ENCODE measurements at regions of chr1 and their contacts with region 1.

Region 1: GRCh38 chr1:95233737-95234500 is at the start of gene RWDD3:
- DNase-seq: peak; percentile 70 to 96
- H3K4me3 ChIP-seq: peak within 1 kb of the TSS; percentile 68 to 85
- H3K27ac ChIP-seq: peak within 1 kb of the TSS; percentile 86 to 93
- H3K4me1 ChIP-seq: peaks cover 0 to 8% of the 10 kb centered on the region in 2 donors
- H3K27me3 ChIP-seq: no peaks in the 10 kb centered on the region
- CTCF ChIP-seq: peak; percentile 52 to 90 (median 79)
- total RNA-seq, gene RWDD3: not detected

Region 2: GRCh38 chr1:94541175-94542087 is 692.5 kb before region 1 on chr1 and contains the start of gene F3:
- intact Hi-C with region 1: loop called (anchors 10 kb)
- DNase-seq: peak; percentile 68 to 95
- H3K4me3 ChIP-seq: peak within 1 kb of the TSS; percentile 73 to 100
- H3K27ac ChIP-seq: peak within 1 kb of the TSS; percentile 88 to 97
- H3K4me1 ChIP-seq: peaks cover 8 to 21% of the 10 kb centered on the region in 2 donors
- H3K27me3 ChIP-seq: no peaks in the 10 kb centered on the region
- CTCF ChIP-seq: peak in 1 of 3 experiments; percentile 17
- total RNA-seq, gene F3: 32.5 TPM

Region 3: DNA sequence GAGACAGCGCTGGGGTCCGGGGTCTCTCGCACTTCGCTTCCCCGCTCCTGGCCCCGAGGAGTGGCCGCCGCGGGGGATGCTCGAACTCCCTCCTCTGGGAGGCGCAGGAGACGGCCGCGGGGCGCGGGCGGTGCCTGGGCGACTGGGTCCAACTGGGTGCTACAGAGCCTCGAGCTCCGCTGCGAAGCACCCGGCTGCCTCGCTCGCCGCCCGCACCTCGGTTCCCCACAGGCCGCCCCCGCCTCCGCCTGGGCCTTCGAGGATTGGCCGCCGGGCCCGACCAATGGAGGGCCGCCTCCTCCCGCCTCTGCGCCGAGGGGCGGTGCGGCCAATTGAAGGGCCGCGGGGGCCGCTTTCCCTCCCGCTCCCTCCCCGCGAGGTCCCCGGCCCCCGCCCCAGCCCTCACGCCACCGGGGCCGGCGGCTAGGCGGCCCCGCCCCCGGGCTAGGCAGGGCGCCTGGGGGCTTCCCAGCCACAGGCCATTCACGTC is 307.0 kb before region 1 on chr1 and contains the start of gene CNN3:
- intact Hi-C with region 1: loop called (anchors 2 kb)
- DNase-seq: peak; percentile 61 to 96
- H3K4me3 ChIP-seq: peak within 1 kb of the TSS; percentile 91 to 98
- H3K27ac ChIP-seq: peak within 1 kb of the TSS; percentile 99 to 100
- H3K4me1 ChIP-seq: peaks cover 9 to 40% of the 10 kb centered on the region in 2 donors
- H3K27me3 ChIP-seq: no peaks in the 10 kb centered on the region
- CTCF ChIP-seq: no peak
- total RNA-seq, gene CNN3: 362 TPM

Region 4: GRCh38 chr1:95084317-95085176 is 149.4 kb before region 1 on chr1:
- intact Hi-C with region 1: loop called (anchors 5 kb)
- DNase-seq: no peak
- H3K4me3 ChIP-seq: no peak overlapping the region
- H3K27ac ChIP-seq: peak overlapping the region; percentile 3 to 32
- H3K4me1 ChIP-seq: peaks cover 3 to 17% of the 10 kb centered on the region in 2 donors
- H3K27me3 ChIP-seq: no peaks in the 10 kb centered on the region
- CTCF ChIP-seq: peak in 2 of 3 experiments; percentile 43 to 56

Region 5: DNA sequence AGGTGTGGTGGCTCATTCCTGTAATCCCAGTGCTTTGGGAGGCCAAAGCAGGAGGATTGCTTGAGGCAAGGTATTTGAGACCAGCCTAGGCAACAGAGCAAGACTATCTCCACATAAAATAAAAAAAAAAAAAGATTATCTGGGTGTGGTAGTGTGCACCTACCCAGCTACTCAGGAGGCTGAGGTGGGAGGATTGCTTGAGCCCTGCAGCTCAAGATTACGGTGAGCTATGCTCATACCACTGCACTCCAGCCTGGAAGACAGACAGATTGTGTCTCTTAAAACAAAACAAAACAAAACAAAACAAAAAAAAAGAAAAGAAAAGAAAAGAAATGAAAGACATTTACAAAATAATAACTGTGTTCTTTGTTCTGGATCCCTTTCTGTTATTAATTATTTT is 122.9 kb before region 1 on chr1:
- intact Hi-C with region 1: no loop called
- DNase-seq: no peak
- H3K4me3 ChIP-seq: no peak overlapping the region
- H3K27ac ChIP-seq: no peak overlapping the region
- H3K4me1 ChIP-seq: no peaks in the 10 kb centered on the region
- H3K27me3 ChIP-seq: no peaks in the 10 kb centered on the region
- CTCF ChIP-seq: no peak

Region 6: DNA sequence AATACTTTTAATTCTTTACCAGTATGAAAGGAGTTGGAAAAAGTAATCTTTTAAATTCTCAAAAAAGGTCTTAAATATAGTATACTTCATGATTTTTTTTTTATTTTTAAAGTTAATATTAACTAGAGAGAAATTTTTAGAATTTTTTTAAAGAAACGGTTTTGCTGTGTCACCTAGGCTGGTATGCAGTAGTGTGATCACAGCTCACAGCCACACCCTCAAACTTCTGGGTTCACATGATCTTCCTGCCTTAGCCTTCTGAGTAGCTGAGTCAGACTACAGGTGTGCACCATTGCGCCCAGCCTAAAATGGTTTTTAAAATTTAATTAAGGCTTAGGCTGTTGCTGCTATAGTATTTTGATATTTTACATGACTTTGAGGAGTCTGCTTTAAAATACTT is 64.4 kb before region 1 on chr1:
- intact Hi-C with region 1: loop called (anchors 5 kb)
- DNase-seq: no peak
- H3K4me3 ChIP-seq: no peak overlapping the region
- H3K27ac ChIP-seq: no peak overlapping the region
- H3K4me1 ChIP-seq: peaks cover 0 to 6% of the 10 kb centered on the region in 2 donors
- H3K27me3 ChIP-seq: no peaks in the 10 kb centered on the region
- CTCF ChIP-seq: no peak

Region 7: DNA sequence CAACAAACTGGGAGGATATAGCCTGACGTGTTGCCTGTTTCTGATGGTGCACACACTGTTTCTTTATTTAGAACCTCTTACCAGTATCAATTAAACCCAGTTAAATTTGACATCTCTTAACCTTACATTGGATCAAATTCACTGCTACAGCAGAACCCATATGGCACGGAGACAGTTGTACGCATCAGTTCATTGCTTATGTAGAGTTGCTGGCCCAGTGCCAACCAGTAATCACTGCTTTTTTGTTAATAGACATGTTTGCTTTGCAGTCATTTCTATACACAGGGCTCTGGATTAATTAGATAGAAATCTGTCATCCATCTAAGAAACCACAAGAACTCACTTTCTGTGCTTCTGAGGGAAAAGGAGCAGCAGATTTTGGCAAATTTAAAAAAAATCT is 154.1 kb after region 1 on chr1:
- intact Hi-C with region 1: no loop called
- DNase-seq: no peak
- H3K4me3 ChIP-seq: no peak overlapping the region
- H3K27ac ChIP-seq: no peak overlapping the region
- H3K4me1 ChIP-seq: no peaks in the 10 kb centered on the region
- H3K27me3 ChIP-seq: no peaks in the 10 kb centered on the region
- CTCF ChIP-seq: no peak